ENCODE measurements at regions of chr4 and their contacts with region 1.

Region 1: DNA sequence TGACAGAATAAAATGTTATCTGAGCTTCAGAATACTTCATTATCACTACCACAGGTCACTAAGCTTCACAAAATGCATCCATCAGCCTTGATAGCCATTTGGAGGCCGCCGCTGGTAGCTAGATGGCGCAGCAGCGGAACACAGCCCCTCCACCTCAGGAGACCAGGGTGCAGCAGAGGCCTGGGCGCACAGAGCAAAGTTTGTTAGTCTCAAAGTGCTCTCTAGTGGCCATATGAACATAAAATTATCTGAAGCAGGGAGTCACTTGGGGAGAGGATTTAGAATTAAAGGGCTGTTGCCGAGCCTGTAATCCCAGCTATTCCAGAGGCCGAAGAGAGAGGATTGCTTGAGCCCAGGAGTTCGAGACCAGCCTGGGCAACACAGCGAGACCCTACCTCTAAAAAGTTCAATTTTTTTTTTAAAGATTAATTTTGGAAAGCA is 8.1 kb upstream of the DCTD start:
- DNase-seq: peak; percentile 33 to 67 (median 52)
- ATAC-seq: peak; percentile 96
- H3K4me3 ChIP-seq: no peak overlapping the region
- H3K4me3 Mint-ChIP-seq: no peak overlapping the region
- H3K27ac ChIP-seq: no peak overlapping the region
- H3K27ac Mint-ChIP-seq: no peak overlapping the region
- H3K4me1 ChIP-seq: no peaks in the 10 kb centered on the region
- H3K4me1 Mint-ChIP-seq: peaks cover 0 to 8% (median 0%) of the 10 kb centered on the region in 7 donors
- H3K27me3 ChIP-seq: no peaks in the 10 kb centered on the region
- H3K27me3 Mint-ChIP-seq: peaks cover 0 to 36% (median 0%) of the 10 kb centered on the region in 5 donors

Region 2: GRCh38 chr4:181301735-181302710 is 1623.3 kb before region 1 on chr4:
- CTCF ChIA-PET with region 1: no interaction called
- POLR2A ChIA-PET with region 1: no interaction called
- intact Hi-C with region 1: loop called in 1 of 2 experiments (anchors 10 kb)
- DNase-seq: no peak
- ATAC-seq: no peak
- H3K4me3 ChIP-seq: no peak overlapping the region
- H3K4me3 Mint-ChIP-seq: no peak overlapping the region
- H3K27ac ChIP-seq: no peak overlapping the region
- H3K27ac Mint-ChIP-seq: peak overlapping the region in 1 of 9 donors; percentile 25
- H3K4me1 ChIP-seq: no peaks in the 10 kb centered on the region
- H3K4me1 Mint-ChIP-seq: no peaks in the 10 kb centered on the region
- H3K27me3 ChIP-seq: no peaks in the 10 kb centered on the region
- H3K27me3 Mint-ChIP-seq: no peaks in the 10 kb centered on the region

Region 3: GRCh38 chr4:182642831-182643230 is 282.5 kb before region 1 on chr4:
- CTCF ChIA-PET with region 1: no interaction called
- POLR2A ChIA-PET with region 1: no interaction called
- intact Hi-C with region 1: loop called in 1 of 2 experiments (anchors 10 kb)
- DNase-seq: no peak
- ATAC-seq: no peak
- H3K4me3 ChIP-seq: no peak overlapping the region
- H3K4me3 Mint-ChIP-seq: no peak overlapping the region
- H3K27ac ChIP-seq: no peak overlapping the region
- H3K27ac Mint-ChIP-seq: no peak overlapping the region
- H3K4me1 ChIP-seq: no peaks in the 10 kb centered on the region
- H3K4me1 Mint-ChIP-seq: no peaks in the 10 kb centered on the region
- H3K27me3 ChIP-seq: no peaks in the 10 kb centered on the region
- H3K27me3 Mint-ChIP-seq: peaks cover 0 to 15% (median 9%) of the 10 kb centered on the region in 5 donors

Region 4: GRCh38 chr4:182806259-182807252 is 118.8 kb before region 1 on chr4:
- CTCF ChIA-PET with region 1: interaction called, 5 read pairs
- POLR2A ChIA-PET with region 1: no interaction called
- intact Hi-C with region 1: loop called (anchors 1 to 2 kb)
- DNase-seq: peak in 8 of 9 donors; percentile 24 to 74 (median 45)
- ATAC-seq: peak; percentile 47
- H3K4me3 ChIP-seq: no peak overlapping the region
- H3K4me3 Mint-ChIP-seq: peak overlapping the region; percentile 64 to 93 (median 80)
- H3K27ac ChIP-seq: no peak overlapping the region
- H3K27ac Mint-ChIP-seq: peak overlapping the region in 6 of 9 donors; percentile 68 to 79 (median 72)
- H3K4me1 ChIP-seq: peaks cover 8 to 16% of the 10 kb centered on the region in 2 donors
- H3K4me1 Mint-ChIP-seq: peaks cover 0 to 20% (median 8%) of the 10 kb centered on the region in 7 donors
- H3K27me3 ChIP-seq: no peaks in the 10 kb centered on the region
- H3K27me3 Mint-ChIP-seq: peaks cover 0 to 13% (median 4%) of the 10 kb centered on the region in 5 donors

Measured in naive thymus-derived CD4-positive, alpha-beta T cell (primary cell).